ENCODE measurements at regions of chr15 and their contacts with region 1.

Region 1: GRCh38 chr15:22989576-22990477 is 9.7 kb upstream of the CYFIP1 start:
- DNase-seq: no peak
- ATAC-seq: peak; percentile 28

Region 2: GRCh38 chr15:22872936-22873701 is 116.7 kb before region 1 on chr15:
- intact Hi-C with region 1: no loop called
- DNase-seq: no peak
- ATAC-seq: no peak

Region 3: DNA sequence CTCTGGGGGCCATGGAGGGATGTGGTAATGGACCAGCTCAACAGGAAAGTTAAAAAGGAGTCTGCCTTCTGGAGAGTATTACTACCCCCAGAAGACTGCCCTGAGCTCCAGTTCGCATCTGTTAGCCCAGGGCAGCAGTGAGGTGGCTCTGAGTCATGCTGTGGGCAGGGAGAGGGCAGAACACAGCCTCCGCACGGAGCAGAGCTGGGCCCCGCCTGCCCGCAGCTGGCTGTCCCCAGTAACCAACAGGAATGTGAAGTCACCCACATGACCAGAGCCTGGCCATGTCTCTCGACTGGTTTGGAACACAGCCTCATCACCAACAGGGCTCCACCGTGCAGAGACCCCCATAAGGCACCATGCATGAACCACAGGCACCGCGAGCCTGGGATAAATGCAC is 71.8 kb before region 1 on chr15:
- intact Hi-C with region 1: loop called (anchors 10 kb)
- DNase-seq: no peak
- ATAC-seq: no peak

Region 4: GRCh38 chr15:22944651-22945050 is 45.2 kb before region 1 on chr15:
- intact Hi-C with region 1: no loop called
- DNase-seq: no peak
- ATAC-seq: no peak